IMR-90 (cell line): ENCODE measurements at regions of chr11 and their contacts with region 1.

Region 1: GRCh38 chr11:112588252-112588694 is 327.6 kb upstream of the PLET1 start:
- DNase-seq: peak; percentile 77
- ATAC-seq: peak; percentile 92
- H3K4me3 ChIP-seq: no peak overlapping the region
- H3K27ac ChIP-seq: no peak overlapping the region
- H3K4me1 ChIP-seq: no peaks in the 10 kb centered on the region
- H3K27me3 ChIP-seq: peaks cover 13% of the 10 kb centered on the region
- CTCF ChIP-seq: peak; percentile 63
- POLR2A ChIP-seq: no peak
- RAD21 ChIP-seq: peak; percentile 67

Region 2: DNA sequence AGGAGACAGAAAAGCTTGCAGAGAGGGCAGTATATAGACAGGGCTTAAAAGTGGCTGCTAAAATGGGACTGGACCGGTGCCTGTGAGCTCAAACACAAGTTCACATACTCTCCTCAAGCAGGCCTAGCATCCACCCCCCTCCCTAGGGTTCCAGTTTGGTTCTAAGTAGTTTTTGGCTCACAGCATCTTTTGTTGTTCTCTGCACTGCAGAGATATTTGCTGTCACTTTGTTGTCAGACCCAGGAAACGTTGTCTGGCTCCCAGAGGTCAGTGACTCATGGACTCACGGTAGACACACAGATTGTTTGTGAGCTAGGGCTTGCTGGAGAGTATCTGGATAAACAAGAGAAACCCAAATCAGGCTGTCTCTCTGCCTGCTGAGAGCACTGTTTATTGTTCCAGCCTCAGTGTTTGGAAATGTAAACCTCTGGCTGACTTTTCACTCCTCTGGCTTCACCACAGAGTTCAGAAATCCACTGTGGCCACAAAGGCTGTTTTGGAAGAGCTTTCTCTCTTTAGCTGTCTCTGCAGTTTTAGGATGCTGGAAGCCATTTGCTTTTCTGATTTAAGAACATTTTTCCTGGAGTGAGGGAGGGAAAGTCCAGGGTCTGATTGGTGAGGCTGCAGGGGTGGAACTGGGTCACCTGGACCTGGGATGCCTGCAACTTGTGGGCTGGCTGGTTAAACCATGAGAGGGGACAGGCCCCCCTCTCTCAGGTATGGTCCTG is 23.9 kb before region 1 on chr11:
- CTCF ChIA-PET with region 1: interaction called, 10 read pairs
- POLR2A ChIA-PET with region 1: no interaction called
- dilution Hi-C with region 1: no loop called
- in situ Hi-C with region 1: no loop called
- intact Hi-C with region 1: no loop called
- DNase-seq: peak; percentile 79
- ATAC-seq: peak; percentile 96
- H3K4me3 ChIP-seq: no peak overlapping the region
- H3K27ac ChIP-seq: no peak overlapping the region
- H3K4me1 ChIP-seq: peaks cover 2% of the 10 kb centered on the region; the same call in 1 of the 2 replicates
- H3K27me3 ChIP-seq: peaks cover 23% of the 10 kb centered on the region
- CTCF ChIP-seq: no peak
- POLR2A ChIP-seq: no peak
- RAD21 ChIP-seq: no peak